ENCODE measurements at regions of chr9 and their contacts with region 1.

Region 1: GRCh38 chr9:37963936-37964739 is 60.2 kb upstream of the SLC25A51 start:
- DNase-seq: peak; percentile 51 to 91
- H3K4me3 ChIP-seq: no peak overlapping the region
- H3K27ac ChIP-seq: peak overlapping the region; percentile 82 to 91
- H3K4me1 ChIP-seq: peaks cover 5 to 34% of the 10 kb centered on the region in 2 donors
- H3K27me3 ChIP-seq: no peaks in the 10 kb centered on the region
- CTCF ChIP-seq: no peak

Region 2: DNA sequence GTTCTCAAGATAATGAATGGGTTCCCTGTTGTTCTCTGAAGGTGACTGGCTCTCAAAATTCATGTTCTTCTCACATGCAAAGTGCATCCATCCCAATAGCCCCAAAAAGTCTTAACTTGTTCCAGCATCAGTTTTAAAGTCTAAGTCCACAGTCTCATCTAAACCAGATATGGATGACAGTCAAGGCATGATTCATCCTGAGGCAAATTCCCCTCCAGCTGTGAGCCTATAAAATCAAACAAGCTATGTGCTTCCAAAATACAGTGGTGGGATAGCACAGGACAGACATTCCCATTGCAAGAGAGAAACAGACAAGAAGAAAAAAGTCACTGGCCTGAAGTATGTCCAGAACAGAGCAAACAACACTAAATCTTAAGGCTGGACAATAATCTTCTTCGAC is 413.4 kb before region 1 on chr9:
- intact Hi-C with region 1: no loop called
- DNase-seq: no peak
- H3K4me3 ChIP-seq: no peak overlapping the region
- H3K27ac ChIP-seq: no peak overlapping the region
- H3K4me1 ChIP-seq: no peaks in the 10 kb centered on the region
- H3K27me3 ChIP-seq: no peaks in the 10 kb centered on the region
- CTCF ChIP-seq: no peak

Region 3: DNA sequence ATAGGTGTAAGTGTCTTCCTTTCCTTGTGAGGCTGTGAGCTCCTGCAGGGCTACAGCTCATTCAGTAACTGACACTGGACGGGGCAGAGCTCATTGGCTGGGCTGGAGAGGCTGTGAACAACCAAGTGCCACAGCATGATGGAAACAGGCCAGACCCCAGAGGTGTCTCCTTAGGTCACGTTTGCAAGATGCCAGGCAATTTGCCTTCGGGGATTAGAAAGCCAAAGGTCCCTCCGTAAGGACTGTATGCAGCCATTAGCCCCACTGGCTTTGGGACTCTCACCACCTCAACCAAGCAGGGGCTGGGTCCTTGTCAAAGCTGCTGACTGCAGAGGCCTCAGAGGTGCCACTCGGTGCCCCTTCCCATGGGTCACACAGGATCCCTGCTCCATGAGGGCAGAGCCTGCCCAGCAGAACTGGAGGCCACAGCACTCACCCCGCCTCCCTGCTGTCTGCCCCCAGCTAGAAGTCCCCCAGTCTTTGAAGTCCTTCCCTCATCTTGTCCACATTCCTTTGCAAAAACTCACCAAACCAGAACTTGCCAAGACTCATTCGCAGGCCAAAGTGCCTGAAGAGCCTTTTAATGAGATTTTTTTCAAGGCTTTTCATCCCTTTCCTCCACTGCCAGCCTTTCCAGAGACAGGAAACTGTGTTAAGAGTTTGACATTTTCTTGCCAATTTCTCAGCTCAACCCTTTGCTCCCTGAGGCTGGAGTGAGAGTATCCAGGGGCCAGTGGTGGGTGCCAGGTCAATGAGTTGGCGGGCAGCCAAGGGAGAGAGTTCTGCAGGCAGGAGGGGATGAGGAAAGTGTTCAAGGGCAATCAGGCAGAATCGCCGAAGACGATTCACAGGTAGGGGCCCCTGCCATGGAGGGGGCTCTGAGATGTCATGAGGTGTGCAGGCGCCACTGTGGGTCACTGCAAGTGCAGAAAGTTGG is 20.5 kb before region 1 on chr9:
- intact Hi-C with region 1: loop called (anchors 1 kb)
- DNase-seq: peak in 1 of 2 donors; percentile 85
- H3K4me3 ChIP-seq: no peak overlapping the region
- H3K27ac ChIP-seq: peak overlapping the region; percentile 65 to 79
- H3K4me1 ChIP-seq: peaks cover 25 to 42% of the 10 kb centered on the region in 2 donors
- H3K27me3 ChIP-seq: no peaks in the 10 kb centered on the region
- CTCF ChIP-seq: no peak

Region 4: DNA sequence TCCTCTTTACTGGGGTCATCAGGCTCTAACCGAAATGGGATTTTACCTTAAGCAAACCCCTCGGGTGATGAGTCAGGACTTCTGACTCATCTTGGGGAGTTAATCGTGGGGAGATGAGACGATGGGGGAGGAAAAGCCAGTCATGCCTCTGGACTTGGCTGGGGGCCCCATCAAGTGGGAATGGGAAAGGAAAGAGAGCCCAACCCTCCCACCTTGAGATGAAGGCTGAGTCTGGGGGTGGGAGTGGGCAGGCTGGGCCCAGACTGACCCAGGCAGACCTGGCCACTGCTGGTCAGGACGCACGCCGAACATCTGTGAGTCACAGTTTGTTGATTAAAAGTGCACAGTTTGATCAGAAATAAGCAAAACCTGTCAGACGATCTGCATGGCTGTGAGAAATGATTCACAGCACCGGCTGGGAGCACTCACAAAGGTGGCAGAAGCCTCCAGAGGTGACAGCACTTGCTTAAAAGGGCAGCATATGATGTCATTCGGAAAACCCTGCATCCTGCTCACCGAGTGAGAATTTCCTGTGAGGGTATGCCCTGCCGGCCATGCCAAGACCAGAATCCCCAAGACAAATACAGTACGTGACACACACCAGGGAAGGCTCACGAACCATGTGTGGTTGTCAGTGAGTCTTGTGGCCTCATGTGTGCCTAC is 10.2 kb before region 1 on chr9:
- intact Hi-C with region 1: loop called (anchors 1 kb)
- DNase-seq: peak; percentile 66 to 84
- H3K4me3 ChIP-seq: no peak overlapping the region
- H3K27ac ChIP-seq: peak overlapping the region; percentile 65 to 68
- H3K4me1 ChIP-seq: peaks cover 7 to 14% of the 10 kb centered on the region in 2 donors
- H3K27me3 ChIP-seq: no peaks in the 10 kb centered on the region
- CTCF ChIP-seq: no peak

Region 5: GRCh38 chr9:37994639-37995347 is 30.7 kb after region 1 on chr9:
- intact Hi-C with region 1: no loop called
- DNase-seq: peak; percentile 35 to 80
- H3K4me3 ChIP-seq: no peak overlapping the region
- H3K27ac ChIP-seq: peak overlapping the region; percentile 26 to 29
- H3K4me1 ChIP-seq: peaks cover 8 to 31% of the 10 kb centered on the region in 2 donors
- H3K27me3 ChIP-seq: no peaks in the 10 kb centered on the region
- CTCF ChIP-seq: no peak

Region 6: DNA sequence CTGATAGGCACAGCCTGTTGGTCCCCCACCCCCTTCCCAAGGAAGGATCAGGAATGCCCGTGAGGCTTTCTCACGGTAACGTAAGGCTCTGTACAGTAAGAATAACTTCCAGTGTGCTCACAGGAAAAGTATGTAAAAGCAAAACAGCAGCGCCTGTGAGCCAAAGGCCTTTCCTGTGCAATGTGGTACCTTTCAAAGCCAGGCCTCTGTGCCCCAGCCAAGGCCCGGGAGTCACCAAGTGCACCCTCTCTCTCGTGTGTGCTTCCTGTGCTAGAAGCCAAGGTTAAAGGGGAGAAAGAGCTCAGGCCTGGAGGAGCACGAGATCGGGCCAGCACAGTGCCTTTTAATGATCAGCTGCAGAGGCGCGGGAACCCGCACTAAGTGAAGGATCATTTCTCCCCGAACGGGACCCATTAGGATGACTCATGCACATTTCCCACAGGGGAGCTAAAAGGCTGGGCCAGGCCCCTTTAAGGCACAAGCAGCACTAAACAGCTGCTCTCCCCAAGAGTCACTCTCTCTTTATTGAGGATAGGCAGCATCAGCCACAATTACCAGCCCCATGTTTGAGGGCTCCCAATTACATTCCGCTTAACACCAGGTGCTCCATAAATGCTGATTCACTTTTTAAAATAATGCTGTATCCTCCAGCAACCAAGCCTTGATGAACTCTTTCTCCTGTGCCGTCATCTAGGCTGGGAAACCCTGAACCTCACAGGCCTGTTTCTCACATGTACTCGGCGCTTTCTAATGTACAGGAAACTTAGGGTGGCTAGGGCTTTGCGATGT is 62.1 kb after region 1 on chr9:
- intact Hi-C with region 1: loop called (anchors 2 kb)
- DNase-seq: peak; percentile 25 to 84
- H3K4me3 ChIP-seq: peak overlapping the region in 1 of 2 donors; percentile 8
- H3K27ac ChIP-seq: peak overlapping the region; percentile 68 to 85
- H3K4me1 ChIP-seq: peaks cover 22 to 56% of the 10 kb centered on the region in 2 donors
- H3K27me3 ChIP-seq: no peaks in the 10 kb centered on the region
- CTCF ChIP-seq: no peak